ENCODE measurements at regions of chr11 and their contacts with region 1.

Region 1: GRCh38 chr11:80502511-80502910 is 1061.7 kb upstream of the TENM4 start:
- DNase-seq: no peak

Region 2: GRCh38 chr11:80553565-80553964 is 51.1 kb after region 1 on chr11:
- intact Hi-C with region 1: loop called (anchors 5 kb)
- DNase-seq: no peak

Measured in posterior cingulate gyrus (tissue), 11 donors.